Panc1 (cell line): ENCODE measurements at regions of chr6 and their contacts with region 1.

Region 1: GRCh38 chr6:105733565-105734162 is 330.8 kb upstream of the PREP start:
- DNase-seq: no peak
- ATAC-seq: no peak
- H3K4me3 ChIP-seq: no peak overlapping the region
- H3K27ac ChIP-seq: no peak overlapping the region; the same call in 1 of the 2 replicates
- H3K4me1 ChIP-seq: no peaks in the 10 kb centered on the region
- H3K27me3 ChIP-seq: no peaks in the 10 kb centered on the region
- CTCF ChIP-seq: peak; percentile 64; the same call in 1 of the 2 replicates

Region 2: GRCh38 chr6:105431226-105431625 is 302.4 kb before region 1 on chr6:
- CTCF ChIA-PET with region 1: no interaction called
- POLR2A ChIA-PET with region 1: no interaction called
- in situ Hi-C with region 1: no loop called
- intact Hi-C with region 1: loop called (anchors 5 kb)
- DNase-seq: no peak
- ATAC-seq: no peak
- H3K4me3 ChIP-seq: no peak overlapping the region
- H3K27ac ChIP-seq: peak overlapping the region; percentile 60
- H3K4me1 ChIP-seq: peaks cover 15% of the 10 kb centered on the region
- H3K27me3 ChIP-seq: no peaks in the 10 kb centered on the region
- CTCF ChIP-seq: peak; percentile 77

Region 3: GRCh38 chr6:105862936-105863607 is 129.4 kb after region 1 on chr6:
- CTCF ChIA-PET with region 1: no interaction called
- POLR2A ChIA-PET with region 1: no interaction called
- in situ Hi-C with region 1: no loop called
- intact Hi-C with region 1: no loop called
- DNase-seq: no peak
- ATAC-seq: no peak
- H3K4me3 ChIP-seq: no peak overlapping the region
- H3K27ac ChIP-seq: no peak overlapping the region
- H3K4me1 ChIP-seq: no peaks in the 10 kb centered on the region
- H3K27me3 ChIP-seq: no peaks in the 10 kb centered on the region
- CTCF ChIP-seq: no peak